MCF 10A (cell line): ENCODE measurements at regions of chr13 and their contacts with region 1.

Region 1: DNA sequence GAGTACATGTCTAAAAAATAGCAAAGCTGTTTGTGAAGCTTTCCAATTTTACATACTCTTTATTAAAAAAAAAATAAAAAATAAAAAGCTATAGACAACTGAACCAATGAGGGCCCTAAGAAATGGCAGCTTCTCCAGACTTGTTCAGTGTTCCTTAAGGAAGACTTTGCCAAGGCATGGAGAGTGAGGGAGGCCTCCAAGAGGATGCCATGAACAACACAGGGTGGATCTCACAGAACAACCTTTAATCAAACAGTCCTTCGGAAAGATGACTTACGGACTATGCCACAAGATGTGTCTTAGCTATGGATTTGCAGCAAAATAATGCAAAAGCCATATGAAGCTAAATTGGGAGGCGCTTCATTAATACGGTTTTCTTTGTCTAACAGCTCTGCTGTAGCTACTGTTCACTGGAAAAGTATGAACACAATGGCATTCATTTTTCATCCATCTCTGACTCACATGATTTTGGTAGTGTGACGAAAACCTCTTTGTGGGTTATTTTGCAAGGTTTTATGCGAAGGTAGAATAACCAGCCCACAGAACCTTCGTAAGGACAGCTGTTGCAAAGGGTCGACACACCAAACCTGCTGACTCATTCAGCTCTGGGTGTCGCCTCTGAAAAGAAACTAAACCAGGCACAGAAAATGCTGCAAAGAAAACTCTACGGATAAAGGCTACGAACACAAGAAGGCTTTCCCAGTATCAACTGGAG is 27.7 kb downstream of the EFNB2 start:
- DNase-seq: peak; percentile 98
- H3K4me3 Mint-ChIP-seq: peak overlapping the region; percentile 70
- H3K27ac Mint-ChIP-seq: peak overlapping the region; percentile 89
- H3K4me1 Mint-ChIP-seq: peaks cover 9% of the 10 kb centered on the region
- H3K27me3 Mint-ChIP-seq: no peaks in the 10 kb centered on the region
- CTCF ChIP-seq: no peak

Region 2: GRCh38 chr13:106376401-106377112 is 131.2 kb before region 1 on chr13:
- CTCF ChIA-PET with region 1: no interaction called
- POLR2A ChIA-PET with region 1: no interaction called
- intact Hi-C with region 1: loop called (anchors 5 kb)
- DNase-seq: peak; percentile 97
- H3K4me3 Mint-ChIP-seq: peak overlapping the region; percentile 53
- H3K27ac Mint-ChIP-seq: peak overlapping the region; percentile 29
- H3K4me1 Mint-ChIP-seq: peaks cover 48% of the 10 kb centered on the region
- H3K27me3 Mint-ChIP-seq: no peaks in the 10 kb centered on the region
- CTCF ChIP-seq: no peak

Region 3: DNA sequence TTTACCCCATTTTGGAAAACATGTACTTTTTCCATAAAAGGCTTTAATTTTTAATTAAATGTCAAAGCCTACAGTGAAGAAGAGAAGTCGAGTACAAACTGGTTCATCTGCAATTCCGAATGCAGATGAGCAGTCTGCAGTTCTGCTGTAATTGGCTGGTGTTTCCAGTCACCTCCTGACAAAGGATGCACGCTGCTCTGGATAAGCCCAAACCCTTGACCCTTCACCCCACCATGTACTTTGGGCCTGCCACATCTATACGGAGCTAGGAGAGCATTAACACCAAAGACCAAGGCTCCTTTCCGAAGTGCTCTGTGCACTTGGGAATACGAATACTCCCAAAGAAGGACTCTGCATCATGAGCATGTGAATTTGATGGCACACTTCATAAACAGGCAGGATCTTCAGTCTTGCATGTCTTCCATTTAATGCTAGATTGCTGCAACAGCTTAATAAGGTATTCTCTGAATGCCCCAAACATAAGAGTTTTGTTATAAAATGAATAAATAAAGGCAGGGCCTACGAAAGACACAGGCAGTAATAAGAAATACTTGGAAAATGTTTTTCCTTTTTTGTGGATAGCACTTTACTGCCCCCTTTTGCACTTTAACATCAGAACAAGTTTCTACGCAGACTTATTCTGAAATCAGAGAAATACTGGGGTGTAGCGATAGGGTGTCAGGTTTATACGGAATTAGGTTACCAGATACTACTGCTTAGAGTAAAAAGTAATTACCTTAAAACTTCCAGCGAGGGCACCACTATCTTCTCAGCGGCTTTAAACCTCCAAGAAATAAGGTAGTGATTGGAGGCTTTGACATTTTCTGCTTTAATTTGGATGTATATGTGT is 12.7 kb after region 1 on chr13:
- CTCF ChIA-PET with region 1: interaction called, 7 read pairs
- POLR2A ChIA-PET with region 1: interaction called, 18 read pairs
- intact Hi-C with region 1: no loop called
- DNase-seq: no peak
- H3K4me3 Mint-ChIP-seq: no peak overlapping the region
- H3K27ac Mint-ChIP-seq: peak overlapping the region; percentile 22
- H3K4me1 Mint-ChIP-seq: peaks cover 44% of the 10 kb centered on the region
- H3K27me3 Mint-ChIP-seq: no peaks in the 10 kb centered on the region
- CTCF ChIP-seq: peak; percentile 31

Region 4: GRCh38 chr13:106610486-106610885 is 102.8 kb after region 1 on chr13:
- CTCF ChIA-PET with region 1: no interaction called
- POLR2A ChIA-PET with region 1: no interaction called
- intact Hi-C with region 1: no loop called
- DNase-seq: peak; percentile 20
- H3K4me3 Mint-ChIP-seq: no peak overlapping the region
- H3K27ac Mint-ChIP-seq: no peak overlapping the region
- H3K4me1 Mint-ChIP-seq: peaks cover 11% of the 10 kb centered on the region
- H3K27me3 Mint-ChIP-seq: no peaks in the 10 kb centered on the region
- CTCF ChIP-seq: no peak